ENCODE measurements at regions of chr2 and their contacts with region 1.

Region 1: DNA sequence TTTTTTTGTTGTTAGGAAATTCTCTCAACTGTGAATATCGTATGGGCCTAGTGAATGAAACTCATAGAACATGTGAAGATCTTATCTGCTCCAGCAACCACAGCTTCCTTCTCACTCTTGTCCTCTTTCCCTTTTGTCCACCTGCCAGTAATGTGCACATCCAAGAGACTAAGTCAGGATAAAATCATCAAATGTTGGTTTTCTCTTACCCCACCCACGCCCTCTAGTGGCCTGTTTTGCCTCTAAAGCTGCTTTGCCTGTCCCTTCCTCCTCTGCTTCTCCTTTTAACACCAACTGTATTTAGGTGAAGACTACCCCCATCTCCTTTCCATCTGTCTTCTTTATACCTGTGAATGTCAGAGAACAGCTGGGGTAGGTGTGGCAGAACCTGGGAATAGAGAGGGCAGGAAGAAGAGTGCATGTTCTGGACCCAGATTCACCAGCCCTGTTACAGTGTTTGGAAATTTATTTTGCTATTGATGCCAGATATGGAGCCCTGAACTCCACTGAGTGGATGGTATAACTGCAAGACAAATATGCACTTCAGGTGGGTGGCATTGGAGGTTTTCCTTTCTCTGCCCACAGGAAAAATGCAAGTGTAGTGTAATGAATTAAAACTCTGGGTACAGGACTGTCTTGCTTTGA is 8.4 kb upstream of the MGAT5 start:
- DNase-seq: no peak
- H3K4me3 ChIP-seq: no peak overlapping the region
- CTCF ChIP-seq: peak; percentile 82

Region 2: GRCh38 chr2:133886735-133887660 is 358.5 kb before region 1 on chr2:
- CTCF ChIA-PET with region 1: interaction called, 11 read pairs
- POLR2A ChIA-PET with region 1: interaction called, 3 read pairs
- DNase-seq: peak; percentile 70
- H3K4me3 ChIP-seq: 0 out of 2 replicates have a peak overlapping the region, but pooled peaks have one; percentile 13
- CTCF ChIP-seq: peak; percentile 60

Region 3: DNA sequence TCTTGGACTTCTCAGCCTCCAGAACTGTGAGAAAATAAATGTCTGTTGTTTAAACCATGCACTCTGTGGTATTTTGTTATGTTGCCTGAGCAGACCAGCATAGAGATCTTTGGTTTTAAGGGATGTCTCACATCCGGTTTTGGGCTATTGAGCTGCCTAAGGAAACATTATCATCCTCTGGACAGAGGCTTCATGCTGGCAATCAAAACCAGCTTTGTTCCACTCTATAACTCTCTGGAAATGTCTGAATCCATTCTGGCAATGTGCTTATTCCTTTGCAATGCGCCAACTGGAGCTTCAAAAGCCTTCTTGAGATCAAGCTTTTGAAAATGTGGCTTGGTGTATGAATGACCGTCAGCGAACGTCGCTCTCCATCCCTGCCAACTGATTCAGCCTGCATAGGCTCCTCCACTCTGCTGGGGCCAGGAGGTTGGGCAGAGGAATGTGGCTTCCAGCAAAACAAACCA is 175.1 kb before region 1 on chr2:
- CTCF ChIA-PET with region 1: no interaction called
- POLR2A ChIA-PET with region 1: no interaction called
- DNase-seq: no peak
- H3K4me3 ChIP-seq: no peak overlapping the region
- CTCF ChIP-seq: no peak

Region 4: DNA sequence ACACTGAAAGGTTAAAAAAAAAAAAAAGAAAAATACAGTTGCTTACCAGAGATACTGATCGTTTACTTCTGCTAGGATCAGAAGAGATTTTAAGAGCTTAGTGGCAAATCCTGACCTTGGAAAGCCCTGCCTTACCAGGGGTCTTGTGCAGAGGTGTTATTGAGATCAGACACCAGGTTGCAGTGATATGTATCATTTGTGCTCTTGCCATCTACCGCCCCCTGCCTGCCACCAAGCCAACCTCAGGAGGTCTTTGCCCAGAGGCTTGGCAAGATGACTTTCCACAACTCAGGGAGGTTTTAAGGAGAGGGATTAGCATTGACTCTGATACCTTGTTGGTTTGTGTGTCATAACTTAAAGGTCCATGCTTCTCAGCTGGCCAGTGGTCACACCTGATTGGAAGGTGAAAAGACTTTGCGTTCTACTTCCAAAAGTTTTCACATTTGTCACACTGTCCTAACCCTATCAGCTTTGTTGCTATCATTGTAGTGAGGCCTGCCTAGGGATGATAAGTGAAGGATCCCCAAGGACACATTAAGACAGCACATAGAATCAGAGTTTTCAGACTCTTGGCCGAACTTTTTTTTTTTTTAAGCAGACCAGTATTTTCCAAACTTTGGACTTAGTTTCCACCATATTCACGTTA is 37.8 kb before region 1 on chr2:
- CTCF ChIA-PET with region 1: interaction called, 27 read pairs
- POLR2A ChIA-PET with region 1: interaction called, 3 read pairs
- DNase-seq: no peak
- H3K4me3 ChIP-seq: no peak overlapping the region
- CTCF ChIP-seq: peak; percentile 61

Region 5: GRCh38 chr2:134232868-134233727 is 12.4 kb before region 1 on chr2:
- CTCF ChIA-PET with region 1: interaction called, 55 read pairs
- POLR2A ChIA-PET with region 1: no interaction called
- DNase-seq: no peak
- H3K4me3 ChIP-seq: no peak overlapping the region
- CTCF ChIP-seq: no peak

Region 6: DNA sequence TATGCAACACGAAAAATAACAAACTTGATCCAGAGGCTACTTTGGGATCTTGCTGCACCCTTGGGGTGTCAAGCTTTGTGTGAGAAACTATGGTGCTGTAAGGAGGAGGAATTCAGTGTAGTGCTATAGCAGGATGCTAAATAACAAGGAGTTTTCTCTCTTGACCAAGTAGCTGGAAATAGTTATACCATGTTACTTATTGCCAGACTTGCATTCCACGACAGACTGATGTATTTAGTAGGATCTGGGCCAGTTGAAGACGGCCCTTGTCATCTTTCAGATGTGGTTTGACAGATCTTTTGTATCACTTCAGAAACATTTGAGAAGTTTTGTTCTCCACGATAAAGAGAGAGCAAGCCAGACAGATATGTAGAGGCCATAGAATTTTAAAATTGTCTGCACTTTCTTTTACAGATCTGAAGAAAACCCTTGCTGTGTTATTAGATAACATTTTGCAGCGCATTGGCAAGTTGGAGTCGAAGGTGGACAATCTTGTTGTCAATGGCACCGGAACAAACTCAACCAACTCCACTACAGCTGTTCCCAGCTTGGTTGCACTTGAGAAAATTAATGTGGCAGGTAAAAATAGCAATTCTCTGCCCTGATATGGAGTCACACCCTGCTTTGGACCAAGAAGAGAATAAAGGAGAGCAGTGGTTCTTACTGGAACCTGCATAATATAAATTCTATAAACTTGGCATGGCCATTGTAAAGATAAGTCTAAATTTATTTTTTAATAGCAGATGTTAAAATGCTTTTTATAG is 24.7 kb after region 1 on chr2:
- CTCF ChIA-PET with region 1: interaction called, 16 read pairs
- POLR2A ChIA-PET with region 1: no interaction called
- DNase-seq: no peak
- H3K4me3 ChIP-seq: no peak overlapping the region
- CTCF ChIP-seq: no peak

Region 7: GRCh38 chr2:134411828-134412638 is 166.6 kb after region 1 on chr2:
- CTCF ChIA-PET with region 1: interaction called, 23 read pairs
- POLR2A ChIA-PET with region 1: no interaction called
- DNase-seq: no peak
- H3K4me3 ChIP-seq: no peak overlapping the region
- CTCF ChIP-seq: peak; percentile 86

Region 8: GRCh38 chr2:134897932-134898331 is 652.5 kb after region 1 on chr2:
- CTCF ChIA-PET with region 1: no interaction called
- POLR2A ChIA-PET with region 1: no interaction called
- DNase-seq: no peak
- H3K4me3 ChIP-seq: no peak overlapping the region
- CTCF ChIP-seq: no peak